ENCODE measurements at regions of chr3 and their contacts with region 1.

Region 1: GRCh38 chr3:108046247-108046646 is 44.6 kb downstream of the CD47 start:
- DNase-seq: no peak

Region 2: DNA sequence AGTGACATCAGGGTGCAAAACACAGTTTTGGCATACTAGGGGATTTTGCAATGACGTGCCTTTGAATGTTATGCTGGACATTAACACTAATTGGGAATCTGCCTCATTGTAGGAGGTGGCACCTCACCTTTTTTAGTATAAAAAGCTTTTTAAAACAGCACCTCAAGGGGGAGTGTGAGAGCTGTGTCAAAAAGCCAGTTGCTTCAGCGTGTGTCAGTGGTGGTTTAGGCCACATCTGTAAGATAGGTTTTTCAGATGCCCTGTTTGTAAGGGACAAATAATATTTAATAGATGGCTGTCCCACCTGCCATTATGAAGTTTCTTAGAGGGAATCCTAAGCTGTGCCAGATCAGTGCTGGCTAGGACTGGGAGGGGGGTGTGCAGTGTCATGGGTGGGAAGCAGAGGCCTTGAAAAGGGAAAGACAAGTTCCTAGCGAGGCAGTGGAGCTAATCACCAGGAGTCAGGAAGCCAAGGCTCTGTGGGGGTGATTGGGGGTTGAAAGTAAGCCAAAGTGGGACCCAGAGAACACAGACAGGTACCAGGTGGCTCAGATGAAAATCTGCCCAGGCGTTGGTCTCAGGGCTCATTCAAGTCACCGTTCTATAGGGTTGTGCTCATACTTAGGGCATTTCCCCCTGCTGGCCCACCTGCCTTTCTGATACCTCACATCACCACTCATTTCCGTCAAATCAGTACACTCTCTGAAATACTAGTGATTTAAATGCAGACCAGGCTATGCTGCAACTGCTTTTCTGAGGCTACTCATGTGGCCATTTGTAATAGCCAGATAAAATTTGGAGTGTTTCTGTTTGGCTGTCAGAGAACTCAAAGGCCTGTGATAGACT is 403.0 kb before region 1 on chr3:
- intact Hi-C with region 1: no loop called
- DNase-seq: no peak

Region 3: DNA sequence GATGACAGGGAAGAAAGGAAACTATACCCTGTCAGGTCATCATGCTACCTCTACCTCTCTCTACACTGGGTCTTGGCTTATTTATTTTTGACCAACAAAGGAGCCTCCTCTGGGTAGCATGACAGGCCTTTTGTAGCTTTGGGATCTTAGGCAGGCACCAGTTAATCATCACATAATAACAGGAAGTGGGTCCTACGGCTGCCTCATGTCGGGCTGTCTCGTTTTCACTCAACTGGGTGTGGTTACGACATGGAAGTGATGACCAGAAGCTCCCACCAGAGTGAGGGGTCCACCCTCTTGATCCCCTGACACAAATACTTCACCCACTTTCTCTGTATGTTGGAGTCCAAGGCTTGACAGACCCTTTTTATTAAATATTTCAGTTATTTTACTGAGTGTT is 60.8 kb before region 1 on chr3:
- intact Hi-C with region 1: no loop called
- DNase-seq: no peak

Region 4: DNA sequence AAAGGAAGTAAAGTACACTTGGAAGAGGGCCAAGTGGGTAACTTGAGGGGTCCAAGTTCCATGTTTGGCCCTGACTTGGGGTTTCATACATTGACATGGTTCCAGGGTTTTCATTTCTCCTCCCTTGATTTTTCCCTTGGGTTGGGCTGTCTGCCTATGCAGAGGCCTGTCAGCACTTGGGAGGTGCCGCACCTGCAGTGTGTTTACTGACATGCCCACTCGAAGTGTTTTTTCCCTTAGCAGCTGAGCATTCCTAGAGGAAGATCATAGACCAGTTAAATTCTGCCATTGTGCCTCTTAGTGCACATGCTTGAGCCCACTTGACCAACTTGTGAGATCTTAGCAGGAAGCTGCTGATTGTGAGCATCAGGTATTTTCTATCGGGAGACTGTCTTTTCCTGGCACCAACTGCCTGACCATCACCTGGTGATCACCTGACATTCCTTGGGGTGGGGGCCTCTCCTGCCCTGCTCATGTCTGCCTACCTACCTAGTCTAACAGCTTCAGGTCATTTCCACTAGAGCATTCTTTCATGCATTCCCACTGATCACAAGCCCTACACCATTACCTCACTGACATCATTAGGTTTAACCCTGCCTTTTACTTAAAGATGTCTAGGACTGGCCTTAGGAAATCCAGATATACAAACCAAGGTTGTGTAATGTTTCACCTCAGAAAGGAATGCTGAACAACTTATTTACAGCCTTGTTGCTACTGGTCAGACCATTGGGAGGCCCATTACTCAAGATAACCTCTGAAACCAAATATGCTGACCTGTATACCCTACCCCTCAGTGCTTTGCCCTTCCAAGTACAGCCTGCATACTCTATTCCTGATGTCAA is 23.8 kb before region 1 on chr3:
- intact Hi-C with region 1: loop called in 1 of 2 experiments (anchors 1 kb)
- DNase-seq: no peak

Region 5: GRCh38 chr3:108887121-108887520 is 840.9 kb after region 1 on chr3:
- intact Hi-C with region 1: no loop called
- DNase-seq: no peak